Body of pancreas (tissue), 4 donors: ENCODE measurements at regions of chr5 and their contacts with region 1.

Region 1: DNA sequence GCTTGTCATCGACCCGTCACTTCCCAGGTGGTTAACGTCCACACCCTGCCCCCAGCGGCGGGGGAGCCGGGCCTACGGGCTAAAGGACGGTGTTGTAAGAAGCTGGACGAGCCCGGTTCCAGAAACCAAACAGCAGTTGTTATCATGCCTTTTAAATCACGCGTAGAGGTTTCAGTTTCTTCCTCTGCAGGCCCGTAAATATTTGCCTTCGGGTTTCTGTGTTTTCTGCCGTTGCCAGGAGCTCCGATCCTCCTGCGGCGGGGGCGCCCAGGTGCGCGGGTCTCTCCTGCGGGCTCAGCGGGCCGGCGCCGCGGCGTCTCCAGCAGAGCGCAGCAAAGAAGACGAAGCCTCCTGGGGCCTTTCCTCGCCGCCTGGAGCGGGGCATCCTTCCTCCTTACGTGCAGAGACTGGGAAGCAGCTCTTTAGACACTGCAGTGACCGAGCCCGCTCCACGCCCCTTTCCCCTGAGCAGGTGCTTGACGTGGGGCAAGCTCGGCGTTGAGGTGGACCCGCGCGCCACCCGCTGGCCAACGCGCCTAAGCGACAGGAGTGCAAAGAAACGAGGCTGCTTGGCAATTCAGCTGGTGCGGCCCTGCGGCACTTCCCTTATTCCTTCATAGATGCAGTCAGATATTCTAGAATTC is 21.8 kb upstream of the TTC1 start:
- DNase-seq: peak; percentile 84 to 91 (median 86)
- ATAC-seq: peak; percentile 98
- H3K4me3 ChIP-seq: peak overlapping the region; percentile 12 to 20
- H3K27ac ChIP-seq: peak overlapping the region in 2 of 4 donors; percentile 8 to 15
- H3K4me1 ChIP-seq: peaks cover 6% of the 10 kb centered on the region
- H3K27me3 ChIP-seq: no peaks in the 10 kb centered on the region
- CTCF ChIP-seq: peak; percentile 72 to 95 (median 80)
- POLR2A ChIP-seq: peak in 1 of 3 donors; percentile 10

Region 2: DNA sequence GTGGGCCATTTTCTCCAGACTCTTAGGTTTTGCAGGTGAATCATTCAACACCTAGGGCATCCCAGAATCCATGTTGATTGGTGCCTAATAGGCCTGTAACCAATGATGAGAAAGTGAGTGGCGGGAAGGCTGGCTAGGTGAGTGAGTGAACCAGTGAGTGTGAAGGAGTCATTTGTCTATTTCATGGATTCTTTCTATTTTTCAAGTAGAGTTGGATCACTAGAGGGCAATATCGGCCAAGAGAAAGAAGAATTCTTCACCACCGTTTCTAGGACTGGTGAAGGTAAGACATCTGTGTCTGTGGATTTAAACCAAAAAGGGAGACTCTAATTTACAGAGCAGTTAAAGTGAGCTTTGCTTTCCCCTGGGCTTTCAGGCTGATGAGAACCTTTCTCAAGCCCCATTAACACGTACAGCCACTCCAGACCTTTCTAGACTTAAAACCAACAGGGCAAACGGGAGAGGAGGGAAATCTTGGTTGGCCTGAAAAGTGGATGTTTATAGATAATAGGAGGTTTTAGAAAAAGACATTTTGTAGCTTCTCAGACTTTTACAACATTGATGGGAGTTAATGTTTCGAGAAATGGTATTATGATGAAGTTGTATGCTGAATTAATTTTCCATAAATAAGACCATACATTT is 542.6 kb before region 1 on chr5:
- intact Hi-C with region 1: loop called (anchors 10 kb)
- DNase-seq: no peak
- ATAC-seq: no peak
- H3K4me3 ChIP-seq: no peak overlapping the region
- H3K27ac ChIP-seq: no peak overlapping the region
- H3K4me1 ChIP-seq: no peaks in the 10 kb centered on the region
- H3K27me3 ChIP-seq: no peaks in the 10 kb centered on the region
- CTCF ChIP-seq: peak in 4 of 7 experiments; percentile 28 to 49 (median 44)
- POLR2A ChIP-seq: no peak

Region 3: DNA sequence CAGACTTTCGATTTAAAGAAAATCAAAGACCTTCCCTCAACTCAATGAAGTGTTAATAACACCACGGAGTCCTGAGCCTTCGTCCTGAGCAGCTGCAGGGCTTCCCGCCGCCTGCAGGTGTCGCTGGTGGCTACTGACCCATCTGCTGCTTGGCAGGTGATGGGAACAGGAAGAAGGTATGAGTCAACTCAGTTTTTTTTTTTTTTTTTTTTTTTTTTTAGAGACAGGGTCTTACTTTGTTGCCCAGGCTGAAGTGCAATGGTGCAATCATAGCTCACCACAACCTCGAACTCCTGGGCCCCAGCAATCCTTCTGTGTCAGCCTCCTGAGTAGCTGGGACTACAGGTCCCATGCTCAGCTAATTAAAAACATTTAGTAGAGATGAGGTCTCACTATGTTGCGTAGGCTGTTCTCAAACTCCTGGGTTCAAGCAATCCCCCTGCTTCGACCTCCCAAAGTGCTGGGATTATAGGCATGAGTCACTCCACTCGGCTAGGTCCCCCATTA is 471.2 kb before region 1 on chr5:
- intact Hi-C with region 1: loop called (anchors 10 kb)
- DNase-seq: peak; percentile 48 to 68 (median 62)
- ATAC-seq: peak; percentile 78
- H3K4me3 ChIP-seq: no peak overlapping the region
- H3K27ac ChIP-seq: no peak overlapping the region
- H3K4me1 ChIP-seq: no peaks in the 10 kb centered on the region
- H3K27me3 ChIP-seq: no peaks in the 10 kb centered on the region
- CTCF ChIP-seq: peak; percentile 37 to 81 (median 72)
- POLR2A ChIP-seq: no peak

Region 4: DNA sequence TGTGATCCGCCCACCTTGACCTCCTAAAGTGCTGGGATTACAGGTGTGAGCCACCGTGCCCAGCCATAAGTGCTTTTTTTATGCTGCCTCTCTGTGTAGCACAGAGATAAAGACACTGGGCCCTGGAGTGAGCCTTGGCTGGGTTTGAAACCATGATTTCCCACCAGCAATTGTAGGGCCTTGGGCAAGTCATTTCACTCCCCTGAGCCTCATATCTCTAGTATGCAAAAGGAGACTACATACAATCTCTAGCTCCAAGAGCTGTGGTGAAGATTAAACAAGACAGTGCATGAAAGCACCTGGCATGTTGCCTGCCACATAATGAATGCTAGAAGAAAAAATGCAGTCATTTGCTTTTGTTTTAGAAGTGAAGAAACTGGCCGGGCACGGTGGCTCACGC is 246.1 kb after region 1 on chr5:
- intact Hi-C with region 1: no loop called
- DNase-seq: no peak
- ATAC-seq: no peak
- H3K4me3 ChIP-seq: no peak overlapping the region
- H3K27ac ChIP-seq: no peak overlapping the region
- H3K4me1 ChIP-seq: no peaks in the 10 kb centered on the region
- H3K27me3 ChIP-seq: no peaks in the 10 kb centered on the region
- CTCF ChIP-seq: no peak
- POLR2A ChIP-seq: no peak